ENCODE measurements at regions of chr17 and their contacts with region 1.

Region 1: GRCh38 chr17:15012351-15012980 is 252.7 kb downstream of the PMP22 start:
- DNase-seq: no peak
- ATAC-seq: no peak
- H3K4me3 ChIP-seq: no peak overlapping the region
- H3K27ac ChIP-seq: no peak overlapping the region
- H3K4me1 ChIP-seq: no peaks in the 10 kb centered on the region
- H3K27me3 ChIP-seq: no peaks in the 10 kb centered on the region
- CTCF ChIP-seq: no peak

Region 2: GRCh38 chr17:13030459-13031300 is 1981.8 kb before region 1 on chr17:
- CTCF ChIA-PET with region 1: interaction called, 10 read pairs
- POLR2A ChIA-PET with region 1: no interaction called
- in situ Hi-C with region 1: no loop called
- intact Hi-C with region 1: no loop called
- DNase-seq: no peak
- ATAC-seq: no peak
- H3K4me3 ChIP-seq: no peak overlapping the region
- H3K27ac ChIP-seq: no peak overlapping the region
- H3K4me1 ChIP-seq: no peaks in the 10 kb centered on the region
- H3K27me3 ChIP-seq: no peaks in the 10 kb centered on the region
- CTCF ChIP-seq: peak; percentile 81

Region 3: DNA sequence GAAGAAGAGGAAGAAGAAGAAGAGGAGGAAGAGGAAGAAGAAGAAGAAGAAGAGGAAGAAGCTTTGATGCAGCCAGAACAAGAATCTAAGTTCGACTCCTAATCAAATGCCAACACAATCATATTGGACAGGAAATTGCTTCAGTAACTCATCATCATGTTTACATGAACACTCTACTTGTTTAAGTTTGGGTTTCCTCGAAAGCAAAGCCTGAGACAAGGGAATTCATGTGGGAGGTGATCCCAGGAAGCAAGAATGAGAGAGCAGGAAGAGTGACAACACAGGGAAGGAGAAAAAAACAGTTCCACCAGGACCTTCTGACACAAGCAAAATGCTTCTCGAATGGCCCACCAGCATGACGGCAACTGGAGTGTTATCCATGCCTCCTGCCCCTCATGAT is 26.3 kb before region 1 on chr17:
- CTCF ChIA-PET with region 1: no interaction called
- POLR2A ChIA-PET with region 1: no interaction called
- in situ Hi-C with region 1: no loop called
- intact Hi-C with region 1: no loop called
- DNase-seq: no peak
- ATAC-seq: no peak
- H3K4me3 ChIP-seq: no peak overlapping the region
- H3K27ac ChIP-seq: no peak overlapping the region
- H3K4me1 ChIP-seq: no peaks in the 10 kb centered on the region
- H3K27me3 ChIP-seq: no peaks in the 10 kb centered on the region
- CTCF ChIP-seq: no peak

Region 4: GRCh38 chr17:15091825-15092224 is 79.4 kb after region 1 on chr17:
- CTCF ChIA-PET with region 1: no interaction called
- POLR2A ChIA-PET with region 1: no interaction called
- in situ Hi-C with region 1: no loop called
- intact Hi-C with region 1: no loop called
- DNase-seq: no peak
- ATAC-seq: no peak
- H3K4me3 ChIP-seq: no peak overlapping the region
- H3K27ac ChIP-seq: no peak overlapping the region
- H3K4me1 ChIP-seq: no peaks in the 10 kb centered on the region
- H3K27me3 ChIP-seq: no peaks in the 10 kb centered on the region; the same call in 1 of the 2 replicates
- CTCF ChIP-seq: peak; percentile 46